Naive thymus-derived CD4-positive, alpha-beta T cell (primary cell): ENCODE measurements at regions of chr7 and their contacts with region 1.

Region 1: GRCh38 chr7:106153891-106154449 is 41.9 kb upstream of the SYPL1 start:
- DNase-seq: peak; percentile 51 to 76 (median 66)
- ATAC-seq: peak; percentile 95
- H3K4me3 ChIP-seq: no peak overlapping the region
- H3K4me3 Mint-ChIP-seq: peak overlapping the region in 8 of 10 donors; percentile 7 to 76 (median 58)
- H3K27ac ChIP-seq: no peak overlapping the region
- H3K27ac Mint-ChIP-seq: peak overlapping the region in 1 of 9 donors; percentile 82
- H3K4me1 ChIP-seq: peaks cover 0 to 8% of the 10 kb centered on the region in 2 donors
- H3K4me1 Mint-ChIP-seq: peaks cover 0 to 13% (median 8%) of the 10 kb centered on the region in 7 donors
- H3K27me3 ChIP-seq: peaks cover 0 to 4% of the 10 kb centered on the region in 2 donors
- H3K27me3 Mint-ChIP-seq: peaks cover 0 to 33% (median 22%) of the 10 kb centered on the region in 5 donors

Region 2: DNA sequence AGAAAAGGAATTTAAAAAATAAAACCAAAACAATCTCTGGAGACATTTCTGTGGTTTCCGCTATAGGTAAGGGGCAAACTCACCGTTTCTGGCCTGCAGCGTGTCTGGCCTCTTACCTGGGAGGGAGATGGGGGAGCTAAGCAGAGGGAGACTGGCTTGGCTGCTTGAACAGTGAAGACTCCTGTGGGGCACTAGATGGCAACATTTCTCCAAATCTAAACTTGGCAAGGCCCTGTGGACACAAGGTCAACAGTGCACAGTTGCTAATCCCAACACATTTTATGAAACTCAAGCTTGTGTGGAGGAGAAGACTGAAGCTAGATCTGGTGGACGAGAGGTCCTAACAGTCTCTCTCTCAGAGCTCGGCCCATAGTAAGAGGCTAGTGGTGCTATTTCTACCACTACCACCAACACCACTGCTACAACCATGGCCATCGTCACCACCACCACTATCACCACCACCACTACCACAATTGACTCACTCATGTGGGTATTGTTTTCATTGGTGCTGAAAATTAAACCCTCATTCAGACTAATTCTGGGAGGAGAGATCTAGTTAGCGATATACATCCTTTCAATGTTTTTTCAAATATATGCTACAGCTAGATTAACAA is 219.3 kb before region 1 on chr7:
- CTCF ChIA-PET with region 1: no interaction called
- POLR2A ChIA-PET with region 1: no interaction called
- intact Hi-C with region 1: loop called in 1 of 2 experiments (anchors 10 kb)
- DNase-seq: peak in 3 of 9 donors; percentile 9 to 23 (median 10)
- ATAC-seq: no peak
- H3K4me3 ChIP-seq: no peak overlapping the region
- H3K4me3 Mint-ChIP-seq: no peak overlapping the region
- H3K27ac ChIP-seq: no peak overlapping the region
- H3K27ac Mint-ChIP-seq: peak overlapping the region in 3 of 9 donors; percentile 9 to 81 (median 10)
- H3K4me1 ChIP-seq: peaks cover 0 to 7% of the 10 kb centered on the region in 2 donors
- H3K4me1 Mint-ChIP-seq: peaks cover 0 to 33% (median 14%) of the 10 kb centered on the region in 7 donors
- H3K27me3 ChIP-seq: no peaks in the 10 kb centered on the region
- H3K27me3 Mint-ChIP-seq: peaks cover 0 to 36% (median 0%) of the 10 kb centered on the region in 5 donors

Region 3: DNA sequence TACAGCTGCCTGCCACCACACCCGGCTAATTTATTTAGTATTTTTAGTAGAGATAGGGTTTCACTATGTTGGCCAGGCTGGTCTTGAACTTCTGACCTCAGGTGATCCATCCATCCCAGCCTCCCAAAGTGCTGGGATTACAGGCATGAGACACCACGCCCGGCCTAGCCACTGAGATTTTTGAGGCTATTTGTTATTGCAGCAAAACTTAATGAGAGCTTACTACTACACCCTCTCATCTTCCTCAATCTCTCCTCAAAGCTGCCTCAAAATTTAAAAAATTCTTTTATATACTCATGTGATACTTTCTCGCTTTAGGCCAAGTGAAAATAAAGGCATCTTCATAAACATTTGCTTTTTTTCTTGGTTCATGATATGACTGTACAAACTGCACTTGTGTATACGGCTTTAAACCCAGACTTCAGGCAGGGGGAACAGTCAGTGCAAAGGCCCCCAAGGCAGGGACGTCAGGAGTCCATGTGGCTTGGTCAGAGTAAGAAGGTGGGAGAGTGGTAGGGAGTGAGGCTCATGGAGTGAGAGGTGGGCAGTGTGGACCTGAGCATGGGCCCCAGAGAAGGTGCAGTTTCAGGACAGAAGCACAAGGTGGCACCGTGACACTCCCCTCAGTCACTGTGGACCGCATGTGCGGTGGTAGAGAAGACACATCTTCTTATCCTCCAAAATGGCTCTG is 97.3 kb before region 1 on chr7:
- CTCF ChIA-PET with region 1: interaction called, 108 read pairs
- POLR2A ChIA-PET with region 1: interaction called, 21 read pairs
- intact Hi-C with region 1: loop called (anchors 1 kb)
- DNase-seq: peak; percentile 42 to 76 (median 68)
- ATAC-seq: peak; percentile 97
- H3K4me3 ChIP-seq: no peak overlapping the region
- H3K4me3 Mint-ChIP-seq: peak overlapping the region in 3 of 10 donors; percentile 38 to 66 (median 49)
- H3K27ac ChIP-seq: no peak overlapping the region
- H3K27ac Mint-ChIP-seq: peak overlapping the region in 5 of 9 donors; percentile 6 to 56 (median 28)
- H3K4me1 ChIP-seq: peaks cover 0 to 12% of the 10 kb centered on the region in 2 donors
- H3K4me1 Mint-ChIP-seq: peaks cover 10 to 30% (median 19%) of the 10 kb centered on the region in 7 donors
- H3K27me3 ChIP-seq: no peaks in the 10 kb centered on the region
- H3K27me3 Mint-ChIP-seq: peaks cover 0 to 18% (median 0%) of the 10 kb centered on the region in 5 donors

Region 4: GRCh38 chr7:106166655-106167342 is 12.8 kb after region 1 on chr7:
- CTCF ChIA-PET with region 1: interaction called, 19 read pairs
- POLR2A ChIA-PET with region 1: interaction called, 5 read pairs
- intact Hi-C with region 1: loop called in 1 of 2 experiments (anchors 1 kb)
- DNase-seq: peak in 6 of 9 donors; percentile 19 to 36 (median 27)
- ATAC-seq: peak; percentile 68
- H3K4me3 ChIP-seq: no peak overlapping the region
- H3K4me3 Mint-ChIP-seq: no peak overlapping the region
- H3K27ac ChIP-seq: no peak overlapping the region
- H3K27ac Mint-ChIP-seq: no peak overlapping the region
- H3K4me1 ChIP-seq: no peaks in the 10 kb centered on the region
- H3K4me1 Mint-ChIP-seq: peaks cover 0 to 3% (median 0%) of the 10 kb centered on the region in 7 donors
- H3K27me3 ChIP-seq: no peaks in the 10 kb centered on the region
- H3K27me3 Mint-ChIP-seq: peaks cover 0 to 27% (median 5%) of the 10 kb centered on the region in 5 donors

Region 5: DNA sequence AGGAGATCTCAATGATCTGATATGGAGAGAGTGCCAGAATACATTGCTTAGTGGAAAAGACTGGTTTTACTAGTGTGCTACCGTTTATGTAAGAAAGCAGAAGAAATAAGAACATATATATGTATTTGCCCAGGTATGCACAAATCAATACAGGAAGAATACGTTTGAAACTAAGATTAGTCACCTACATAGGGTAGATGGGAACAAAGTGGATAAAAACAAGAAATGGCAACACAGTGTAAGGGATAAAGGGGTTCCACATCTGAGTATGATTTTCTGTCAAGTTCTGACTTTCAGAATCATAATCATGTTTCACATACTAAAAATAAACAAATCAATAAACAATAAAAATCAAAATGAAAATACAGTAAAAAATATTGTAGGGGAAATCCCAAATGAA is 279.4 kb after region 1 on chr7:
- CTCF ChIA-PET with region 1: no interaction called
- POLR2A ChIA-PET with region 1: no interaction called
- intact Hi-C with region 1: no loop called
- DNase-seq: no peak
- ATAC-seq: no peak
- H3K4me3 ChIP-seq: no peak overlapping the region
- H3K4me3 Mint-ChIP-seq: no peak overlapping the region
- H3K27ac ChIP-seq: no peak overlapping the region
- H3K27ac Mint-ChIP-seq: no peak overlapping the region
- H3K4me1 ChIP-seq: no peaks in the 10 kb centered on the region
- H3K4me1 Mint-ChIP-seq: no peaks in the 10 kb centered on the region
- H3K27me3 ChIP-seq: no peaks in the 10 kb centered on the region
- H3K27me3 Mint-ChIP-seq: peaks cover 0 to 22% (median 15%) of the 10 kb centered on the region in 5 donors

Region 6: DNA sequence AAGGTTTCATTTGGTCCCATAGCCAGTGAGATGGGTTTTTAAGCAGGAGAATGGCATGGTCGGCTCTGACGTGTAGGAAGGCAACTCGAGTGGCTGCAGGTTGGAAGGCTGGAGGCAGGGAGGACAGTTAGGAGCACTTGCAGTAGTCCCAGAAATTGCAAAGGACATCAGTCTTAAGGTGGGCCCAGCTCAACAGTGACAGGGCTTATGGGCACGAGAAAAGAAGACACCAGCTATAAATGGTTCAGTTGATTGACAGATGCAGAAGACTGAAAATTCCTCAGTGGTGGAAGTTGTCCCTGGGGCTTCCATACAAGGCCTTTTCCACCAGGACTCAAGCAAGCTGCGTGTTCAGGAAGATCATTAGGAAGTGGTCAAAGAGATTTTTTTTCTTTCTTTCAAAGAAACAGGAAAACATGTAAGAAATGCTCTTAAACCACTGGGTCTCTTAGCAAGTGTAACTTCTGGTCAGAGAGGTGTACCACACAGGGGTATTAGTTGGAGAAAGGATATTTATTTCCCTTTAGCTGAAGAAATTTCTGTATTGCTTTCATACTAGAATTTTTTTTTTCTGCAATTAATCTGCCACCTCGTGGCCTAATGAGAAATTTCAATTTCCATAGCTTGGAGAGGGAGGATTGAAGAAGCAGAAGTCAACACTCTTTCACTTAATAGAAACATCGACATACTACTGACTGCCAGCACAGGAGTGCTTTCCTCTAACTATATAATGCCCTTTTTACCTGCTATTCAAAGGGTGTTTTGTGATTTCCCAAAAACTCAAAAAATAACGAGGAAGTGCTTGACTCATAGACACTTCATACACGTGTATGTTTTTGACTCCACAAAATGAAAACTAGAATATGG is 308.3 kb after region 1 on chr7:
- CTCF ChIA-PET with region 1: no interaction called
- POLR2A ChIA-PET with region 1: no interaction called
- intact Hi-C with region 1: no loop called
- DNase-seq: peak in 5 of 9 donors; percentile 11 to 32 (median 14)
- ATAC-seq: peak; percentile 51
- H3K4me3 ChIP-seq: no peak overlapping the region
- H3K4me3 Mint-ChIP-seq: no peak overlapping the region
- H3K27ac ChIP-seq: no peak overlapping the region
- H3K27ac Mint-ChIP-seq: peak overlapping the region in 1 of 9 donors; percentile 14
- H3K4me1 ChIP-seq: no peaks in the 10 kb centered on the region
- H3K4me1 Mint-ChIP-seq: peaks cover 0 to 14% (median 0%) of the 10 kb centered on the region in 7 donors
- H3K27me3 ChIP-seq: no peaks in the 10 kb centered on the region
- H3K27me3 Mint-ChIP-seq: no peaks in the 10 kb centered on the region